Mammary epithelial cell (primary cell): ENCODE measurements at regions of chr3 and their contacts with region 1.

Region 1: DNA sequence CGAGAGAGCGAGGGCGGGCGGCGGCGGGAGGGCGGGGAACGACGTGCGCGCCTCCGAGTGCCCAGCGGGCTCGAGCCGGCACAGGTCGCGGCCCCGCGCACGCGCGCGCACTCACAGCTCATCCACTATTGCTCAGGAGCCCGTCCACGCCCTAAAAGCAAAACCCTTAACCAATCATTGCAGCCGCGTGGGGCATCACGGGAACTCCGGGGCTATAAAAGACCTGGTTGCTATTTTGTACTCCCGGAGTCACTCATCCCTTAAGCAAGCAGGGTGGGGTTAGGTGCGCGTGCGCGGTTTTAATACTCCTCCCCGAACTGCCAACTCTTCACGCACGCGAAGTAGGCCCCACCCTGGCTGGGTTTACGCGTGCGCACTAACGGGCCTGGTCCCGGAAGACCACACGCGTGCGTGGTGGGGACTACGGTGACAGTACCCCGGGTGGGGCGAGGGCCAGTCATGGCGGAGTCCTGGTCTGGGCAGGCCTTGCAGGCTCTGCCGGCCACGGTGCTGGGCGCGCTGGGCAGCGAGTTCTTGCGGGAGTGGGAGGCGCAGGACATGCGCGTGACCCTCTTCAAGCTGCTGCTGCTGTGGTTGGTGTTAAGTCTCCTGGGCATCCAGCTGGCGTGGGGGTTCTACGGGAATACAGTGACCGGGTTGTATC is at the starts of genes RHOA and TCTA:
- DNase-seq: peak; percentile 100
- H3K4me3 ChIP-seq: peak within 1 kb of the TSS; percentile 86 to 94 (median 90)
- H3K27ac ChIP-seq: peak within 1 kb of the TSS; percentile 91
- H3K4me1 ChIP-seq: peaks cover 35% of the 10 kb centered on the region
- H3K27me3 ChIP-seq: no peaks in the 10 kb centered on the region
- CTCF ChIP-seq: no peak
- total RNA-seq, gene RHOA: 406 to 421 TPM
- total RNA-seq, gene TCTA: 17.3 to 21.7 TPM

Region 2: DNA sequence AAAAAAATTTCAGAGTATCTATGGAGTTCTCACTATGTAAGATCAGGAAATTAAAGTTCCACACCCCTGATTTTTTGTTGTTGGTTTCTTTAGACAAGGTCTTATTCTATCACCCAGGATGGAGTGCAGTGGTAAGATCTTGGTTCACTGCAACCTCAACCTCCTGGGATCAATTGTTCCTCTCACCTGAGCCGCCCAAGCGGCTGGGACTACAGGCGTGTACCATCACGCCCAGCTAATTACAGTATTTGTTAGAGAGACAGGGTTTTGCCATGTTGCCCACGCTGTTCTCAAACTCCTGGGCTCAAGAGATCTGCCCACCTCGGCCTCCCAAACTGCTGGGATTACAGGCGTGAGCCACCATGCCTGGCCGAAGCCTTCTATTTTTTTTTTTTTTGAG is 330.7 kb before region 1 on chr3:
- CTCF ChIA-PET with region 1: no interaction called
- dilution Hi-C with region 1: loop called (anchors 5 kb)
- in situ Hi-C with region 1: no loop called
- intact Hi-C with region 1: no loop called
- DNase-seq: peak; percentile 41
- H3K4me3 ChIP-seq: no peak overlapping the region
- H3K27ac ChIP-seq: no peak overlapping the region
- H3K4me1 ChIP-seq: peaks cover 4% of the 10 kb centered on the region
- H3K27me3 ChIP-seq: no peaks in the 10 kb centered on the region
- CTCF ChIP-seq: no peak

Region 3: DNA sequence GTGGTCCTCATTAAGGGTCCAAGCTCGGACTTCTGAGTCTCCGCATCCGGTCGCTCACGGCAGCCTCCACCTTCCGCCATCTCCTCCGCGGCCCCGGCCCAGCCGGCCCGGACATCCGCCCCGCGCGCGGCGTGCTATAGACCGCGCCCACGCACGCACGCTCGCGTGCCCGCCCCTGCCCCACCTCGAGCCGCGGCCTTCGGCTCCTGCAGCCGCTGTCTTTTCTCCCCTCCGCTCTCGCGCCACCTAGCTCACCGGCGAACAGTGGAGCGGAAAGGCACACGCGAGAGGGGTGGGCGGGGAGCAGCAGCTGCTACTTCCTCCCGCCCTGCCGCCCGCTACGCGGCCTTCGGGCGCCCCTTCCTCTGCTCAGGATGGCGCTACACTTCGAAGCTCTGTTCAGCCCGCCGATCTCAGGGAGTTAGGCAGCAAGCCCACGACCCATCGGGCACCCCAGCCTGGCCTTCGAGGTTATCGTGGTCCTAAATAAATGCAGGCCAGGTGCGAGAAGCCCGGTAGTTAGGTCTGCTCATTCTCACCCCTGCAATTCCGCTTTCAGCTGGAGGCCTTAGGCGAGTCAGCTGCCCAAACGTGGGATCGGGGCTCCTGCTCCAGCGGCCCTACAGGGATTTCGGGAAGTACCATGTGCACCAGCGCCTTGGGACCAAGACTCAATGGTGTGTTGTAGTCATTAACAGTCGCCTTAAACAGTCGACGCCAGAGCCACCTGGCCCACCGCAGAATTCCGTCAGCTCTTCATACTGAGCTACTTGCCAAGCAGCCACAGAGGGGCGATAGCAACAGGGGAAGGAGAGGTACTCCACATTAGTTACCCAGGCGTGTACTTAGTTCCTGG is 71.9 kb before region 1 on chr3 and contains the start of gene USP4:
- CTCF ChIA-PET with region 1: interaction called, 4 read pairs
- dilution Hi-C with region 1: loop called (anchors 5 kb)
- in situ Hi-C with region 1: no loop called
- intact Hi-C with region 1: loop called (anchors 1 kb)
- DNase-seq: peak; percentile 85
- H3K4me3 ChIP-seq: peak within 1 kb of the TSS; percentile 68 to 86 (median 83)
- H3K27ac ChIP-seq: peak within 1 kb of the TSS; percentile 67
- H3K4me1 ChIP-seq: peaks cover 15% of the 10 kb centered on the region
- H3K27me3 ChIP-seq: no peaks in the 10 kb centered on the region
- CTCF ChIP-seq: peak; percentile 31 to 58
- total RNA-seq, gene USP4: 19.0 to 54.6 TPM

Region 4: DNA sequence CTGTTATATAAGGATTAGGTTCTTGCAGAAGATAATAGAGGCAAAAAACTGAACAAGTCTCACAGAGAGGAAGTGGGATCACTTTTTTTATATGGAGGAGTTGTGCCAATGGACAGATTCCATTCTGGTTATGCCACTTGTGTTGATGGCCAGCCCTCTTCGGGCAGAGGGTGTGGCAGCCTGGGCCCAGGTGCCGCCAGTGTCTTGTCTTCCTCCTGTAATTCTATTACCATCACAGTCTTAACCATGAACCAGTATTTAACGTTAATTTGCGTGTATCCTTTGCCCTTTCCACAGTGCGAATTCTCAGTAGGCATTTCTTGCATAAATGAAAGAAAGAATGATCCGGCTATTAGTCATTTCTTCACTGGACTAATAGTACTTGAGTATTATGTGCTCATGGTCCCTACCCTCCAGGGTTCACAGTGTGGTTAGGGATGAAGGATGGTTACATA is 65.3 kb before region 1 on chr3:
- CTCF ChIA-PET with region 1: no interaction called
- dilution Hi-C with region 1: loop called (anchors 5 kb)
- in situ Hi-C with region 1: no loop called
- intact Hi-C with region 1: no loop called
- DNase-seq: peak; percentile 67
- H3K4me3 ChIP-seq: no peak overlapping the region
- H3K27ac ChIP-seq: peak overlapping the region; percentile 20
- H3K4me1 ChIP-seq: peaks cover 37% of the 10 kb centered on the region
- H3K27me3 ChIP-seq: no peaks in the 10 kb centered on the region
- CTCF ChIP-seq: no peak

Region 5: DNA sequence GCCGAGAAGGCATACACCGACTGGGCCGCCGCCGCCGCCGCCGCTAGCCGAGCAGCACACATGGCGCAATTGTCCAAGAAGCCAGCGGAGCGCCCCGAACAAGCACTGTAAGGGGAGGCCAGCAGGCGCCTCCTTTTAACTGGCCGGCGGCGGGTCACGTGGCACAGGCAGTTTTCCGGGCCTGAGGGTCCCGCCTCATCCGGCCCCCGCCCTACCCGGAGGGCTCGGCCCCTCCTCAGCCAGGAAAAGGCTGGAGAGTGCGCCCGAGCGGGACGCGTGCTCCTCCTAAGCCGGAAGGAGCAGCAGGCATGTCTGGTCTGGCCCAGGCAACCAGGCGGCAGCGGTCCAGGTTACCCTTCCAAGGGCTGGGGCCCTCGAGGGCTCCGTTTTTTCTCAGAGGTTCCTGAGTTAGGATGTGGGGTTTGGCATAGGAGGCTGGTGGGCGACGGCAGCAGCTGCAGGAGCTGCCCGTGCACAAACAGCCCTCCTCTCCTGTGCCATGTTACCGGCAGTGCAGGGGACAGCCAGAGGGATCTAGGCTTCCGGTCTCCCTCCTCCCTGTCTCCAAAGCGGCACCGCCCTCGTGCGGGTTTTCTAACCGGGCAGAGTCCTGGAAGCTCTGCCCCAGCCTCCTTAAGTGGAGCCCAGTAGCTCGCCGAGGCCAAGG is 53.8 kb before region 1 on chr3 and contains the start of gene GPX1:
- CTCF ChIA-PET with region 1: interaction called, 3 read pairs
- dilution Hi-C with region 1: no loop called
- in situ Hi-C with region 1: no loop called
- intact Hi-C with region 1: loop called (anchors 1 kb)
- DNase-seq: peak; percentile 97
- H3K4me3 ChIP-seq: peak within 1 kb of the TSS; percentile 51 to 77 (median 66)
- H3K27ac ChIP-seq: peak within 1 kb of the TSS; percentile 85
- H3K4me1 ChIP-seq: peaks cover 33% of the 10 kb centered on the region
- H3K27me3 ChIP-seq: no peaks in the 10 kb centered on the region
- CTCF ChIP-seq: no peak
- total RNA-seq, gene GPX1: 275 to 607 TPM

Region 6: DNA sequence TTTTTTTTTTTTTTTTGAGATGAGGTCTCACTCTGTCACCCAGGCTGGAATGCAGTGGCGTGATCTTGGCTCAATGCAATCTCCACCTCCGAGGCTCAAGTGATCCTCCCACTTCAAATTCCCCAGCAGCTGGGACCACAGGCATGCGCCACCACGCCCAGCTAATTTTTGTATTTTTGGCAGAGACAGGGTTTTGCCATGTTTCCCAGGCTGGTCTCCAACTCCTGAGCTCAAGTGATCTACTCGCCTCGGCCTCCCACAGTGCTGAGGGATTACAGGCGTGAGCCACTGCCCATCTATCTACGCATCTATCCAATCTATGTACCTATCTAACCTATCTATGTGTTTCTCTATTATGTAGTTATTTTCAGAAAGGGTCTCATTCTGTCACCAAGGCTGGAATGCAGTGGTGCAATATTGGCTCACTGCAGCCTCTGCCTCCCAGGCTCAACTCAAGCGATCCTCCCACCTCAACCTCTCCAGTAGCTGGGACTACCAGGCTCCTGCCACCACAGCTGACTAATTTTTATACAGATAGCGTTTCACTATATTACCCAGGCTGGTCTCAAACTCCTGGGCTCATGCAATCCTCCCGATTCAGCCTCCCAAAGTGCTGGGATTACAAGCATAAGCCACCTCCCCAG is 33.7 kb before region 1 on chr3:
- CTCF ChIA-PET with region 1: no interaction called
- dilution Hi-C with region 1: no loop called
- in situ Hi-C with region 1: no loop called
- intact Hi-C with region 1: loop called (anchors 1 kb)
- DNase-seq: peak; percentile 86
- H3K4me3 ChIP-seq: no peak overlapping the region
- H3K27ac ChIP-seq: peak overlapping the region; percentile 64
- H3K4me1 ChIP-seq: peaks cover 21% of the 10 kb centered on the region
- H3K27me3 ChIP-seq: no peaks in the 10 kb centered on the region
- CTCF ChIP-seq: no peak

Region 7: DNA sequence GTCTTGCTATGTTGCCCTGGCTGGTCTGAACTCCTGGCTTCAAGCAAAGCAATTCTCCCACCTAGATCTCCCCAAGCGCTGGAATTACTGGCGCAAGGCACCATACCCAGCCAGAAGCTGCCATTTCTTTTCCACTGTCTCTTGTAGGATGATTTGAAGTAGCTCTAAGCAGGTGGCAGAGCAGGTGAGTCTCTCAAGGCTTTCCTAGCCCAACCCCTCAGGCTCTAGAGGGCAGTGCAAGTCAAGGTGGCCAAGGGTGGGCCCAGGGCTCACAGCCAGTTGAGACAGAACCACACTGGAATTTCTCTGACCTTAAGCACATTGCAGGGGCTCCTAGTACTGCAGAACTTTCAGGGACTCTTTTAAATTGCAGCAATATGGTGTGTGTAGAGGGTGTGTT is 42.4 kb after region 1 on chr3:
- CTCF ChIA-PET with region 1: interaction called, 12 read pairs
- dilution Hi-C with region 1: no loop called
- in situ Hi-C with region 1: no loop called
- intact Hi-C with region 1: loop called (anchors 1 kb)
- DNase-seq: peak; percentile 47
- H3K4me3 ChIP-seq: no peak overlapping the region
- H3K27ac ChIP-seq: no peak overlapping the region
- H3K4me1 ChIP-seq: peaks cover 16% of the 10 kb centered on the region
- H3K27me3 ChIP-seq: no peaks in the 10 kb centered on the region
- CTCF ChIP-seq: peak; percentile 45 to 55